GM23248 (cell line): ENCODE measurements at regions of chr1 and their contacts with region 1.

Region 1: DNA sequence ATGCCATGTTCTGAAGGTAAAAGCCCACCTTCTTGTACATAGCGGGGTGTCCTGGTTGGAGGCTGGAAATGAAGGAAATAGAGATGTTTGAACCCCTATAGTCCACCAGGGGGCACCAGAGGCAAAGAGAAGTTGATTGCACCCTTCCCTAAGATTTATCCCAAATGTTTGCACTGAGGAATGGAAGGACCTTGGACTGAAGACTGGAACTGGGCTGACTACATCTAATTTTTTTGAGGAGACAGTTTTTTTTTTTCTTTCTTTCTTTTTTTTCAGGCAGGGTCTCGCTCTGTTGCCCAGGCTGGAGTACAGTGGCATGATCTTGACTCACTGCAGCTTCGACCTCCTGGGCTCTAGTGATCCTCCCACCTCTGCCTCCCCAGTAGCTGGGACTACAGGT is 55.3 kb upstream of the EIF4G3 start:
- DNase-seq: peak; percentile 64
- H3K4me3 ChIP-seq: no peak overlapping the region
- H3K27ac ChIP-seq: no peak overlapping the region
- H3K4me1 ChIP-seq: peaks cover 18% of the 10 kb centered on the region
- H3K27me3 ChIP-seq: no peaks in the 10 kb centered on the region

Region 2: DNA sequence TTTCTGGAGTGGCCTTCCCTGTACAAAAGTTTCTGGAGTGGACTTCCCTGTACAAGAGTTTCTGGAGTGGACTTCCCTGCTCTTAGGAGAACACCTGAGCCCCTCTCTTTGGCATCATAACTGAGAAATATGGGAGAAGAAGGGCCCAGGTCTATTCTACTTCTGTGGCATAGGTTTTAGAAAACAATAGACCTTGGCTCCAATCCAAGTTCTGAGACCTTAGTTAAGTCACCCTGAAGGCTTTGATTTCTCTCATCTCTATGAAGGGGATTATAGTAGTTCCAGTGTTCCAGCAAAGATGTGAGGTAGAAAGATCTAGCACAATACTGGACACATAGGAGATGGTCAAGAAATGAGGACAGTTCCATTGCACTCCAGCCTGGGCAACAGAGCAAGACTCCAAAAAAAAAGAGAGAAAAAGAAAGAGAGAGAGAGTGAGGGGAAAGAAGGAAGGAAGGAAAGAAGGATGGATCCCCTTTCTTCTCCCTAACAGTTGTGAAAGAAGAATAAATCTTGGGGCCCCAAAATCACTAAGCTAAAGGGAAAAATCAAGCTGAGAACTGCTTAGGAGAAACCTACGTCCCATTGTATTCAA is 42.0 kb before region 1 on chr1:
- in situ Hi-C with region 1: no loop called
- DNase-seq: no peak
- H3K4me3 ChIP-seq: no peak overlapping the region
- H3K27ac ChIP-seq: no peak overlapping the region
- H3K4me1 ChIP-seq: peaks cover 9% of the 10 kb centered on the region; the same call in 1 of the 2 replicates
- H3K27me3 ChIP-seq: no peaks in the 10 kb centered on the region

Region 3: DNA sequence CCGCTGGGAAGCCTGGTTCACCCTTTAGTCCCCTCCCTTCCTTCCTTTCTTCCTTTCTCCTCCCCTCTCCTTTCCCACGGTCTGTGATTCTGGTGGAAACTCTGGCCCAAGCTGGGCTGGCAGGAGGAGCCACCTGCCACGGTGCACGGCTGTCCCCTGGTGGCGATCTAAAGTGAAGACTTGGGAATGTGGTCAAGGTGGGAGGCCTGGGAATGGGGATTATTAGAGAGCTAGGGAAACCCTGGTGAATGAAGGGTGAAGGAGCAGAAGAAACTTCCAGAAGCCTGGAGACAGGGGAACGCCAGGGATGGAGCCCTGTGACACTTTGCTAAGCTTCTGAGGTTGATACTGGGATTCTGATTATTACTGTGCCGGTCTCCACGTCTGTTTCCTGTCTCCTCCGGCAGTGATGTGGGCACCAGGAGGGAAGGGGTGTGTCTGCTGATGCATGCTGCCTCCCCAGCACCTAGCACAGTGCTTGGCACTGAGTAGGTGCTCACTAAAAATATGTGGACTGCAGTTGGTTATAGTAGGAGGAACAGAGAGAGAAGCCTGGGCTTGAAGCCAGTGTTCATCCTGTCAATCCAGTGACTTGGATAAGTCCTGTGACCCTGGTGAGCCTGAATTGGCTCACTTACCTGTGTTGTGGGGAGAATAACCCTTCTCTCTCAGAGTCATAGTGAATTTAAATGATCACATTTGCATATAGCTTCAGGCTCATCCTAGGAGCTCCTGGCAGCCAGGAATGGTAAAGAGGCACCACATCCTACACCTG is 136.7 kb after region 1 on chr1:
- in situ Hi-C with region 1: loop called (anchors 10 kb)
- DNase-seq: peak; percentile 90
- H3K4me3 ChIP-seq: no peak overlapping the region
- H3K27ac ChIP-seq: no peak overlapping the region
- H3K4me1 ChIP-seq: no peaks in the 10 kb centered on the region
- H3K27me3 ChIP-seq: no peaks in the 10 kb centered on the region

Region 4: DNA sequence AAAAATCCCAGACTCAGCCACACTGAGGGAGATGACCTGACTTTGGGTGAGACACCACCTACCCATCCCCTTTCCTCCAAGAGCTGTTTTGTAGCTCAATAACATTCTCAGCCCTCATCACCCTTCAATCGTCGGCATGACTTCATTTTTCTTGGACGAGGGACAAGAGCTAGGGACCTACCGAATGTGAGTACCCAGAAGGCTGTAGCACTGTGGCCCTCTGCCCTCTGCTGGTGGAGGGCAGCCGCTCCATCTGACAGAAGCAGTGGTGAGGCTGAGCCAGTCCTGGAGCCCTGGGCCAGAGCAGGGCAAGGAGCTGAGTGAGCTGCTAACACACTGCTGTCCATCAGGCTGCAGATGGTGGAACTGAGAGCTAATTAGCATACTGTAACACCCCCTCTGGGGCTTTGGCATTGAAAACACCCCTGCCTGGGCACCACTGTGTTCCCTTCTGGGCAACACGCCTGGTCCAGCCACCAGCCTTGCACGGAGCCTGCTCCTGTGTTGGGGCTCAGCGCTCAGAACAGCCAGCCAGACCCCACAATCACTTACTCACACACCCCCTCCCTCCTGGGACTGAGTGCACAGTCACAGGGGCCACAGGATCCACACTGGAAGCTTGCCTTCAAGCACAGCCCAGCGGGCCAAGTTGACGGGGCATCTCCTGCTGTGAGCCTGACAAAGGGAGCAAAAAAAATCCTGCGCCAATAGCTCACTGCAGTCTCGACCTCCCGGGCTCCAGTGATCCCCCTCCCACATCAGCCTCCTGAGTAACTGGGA is 258.9 kb after region 1 on chr1:
- in situ Hi-C with region 1: loop called (anchors 25 kb)
- DNase-seq: peak; percentile 86
- H3K4me3 ChIP-seq: no peak overlapping the region
- H3K27ac ChIP-seq: no peak overlapping the region
- H3K4me1 ChIP-seq: 0 out of 2 replicates have a peak, but pooled peaks cover 5% of the 10 kb centered on the region
- H3K27me3 ChIP-seq: peaks cover 25% of the 10 kb centered on the region

Region 5: GRCh38 chr1:21669258-21670058 is 437.4 kb after region 1 on chr1 and contains the start of gene RAP1GAP:
- in situ Hi-C with region 1: loop called (anchors 10 kb)
- DNase-seq: peak; percentile 46
- H3K4me3 ChIP-seq: peak within 1 kb of the TSS; percentile 48
- H3K27ac ChIP-seq: no peak within 1 kb of the TSS
- H3K4me1 ChIP-seq: peaks cover 30% of the 10 kb centered on the region
- H3K27me3 ChIP-seq: peaks cover 14% of the 10 kb centered on the region
- total RNA-seq, gene RAP1GAP: 0.97 TPM in 1 of 2 replicates, not detected in the other

Region 6: GRCh38 chr1:22039594-22040285 is 807.7 kb after region 1 on chr1:
- in situ Hi-C with region 1: no loop called
- DNase-seq: peak; percentile 74
- H3K4me3 ChIP-seq: 0 out of 2 replicates have a peak overlapping the region, but pooled peaks have one; percentile 34
- H3K27ac ChIP-seq: peak overlapping the region; percentile 7; the same call in 1 of the 2 replicates
- H3K4me1 ChIP-seq: peaks cover 19% of the 10 kb centered on the region
- H3K27me3 ChIP-seq: no peaks in the 10 kb centered on the region